ENCODE measurements at regions of chr2 and their contacts with region 1.

Region 1: GRCh38 chr2:43950383-43951008 is 45.3 kb downstream of the LRPPRC start:
- DNase-seq: no peak
- H3K4me3 ChIP-seq: no peak overlapping the region
- H3K27ac ChIP-seq: no peak overlapping the region
- H3K4me1 ChIP-seq: peaks cover 0 to under 1% (median 0%) of the 10 kb centered on the region in 4 experiments; a peak in 1 of 7 replicates
- H3K27me3 ChIP-seq: no peaks in the 10 kb centered on the region
- CTCF ChIP-seq: no peak
- EP300 ChIP-seq: no peak
- POLR2A ChIP-seq: no peak
- RAD21 ChIP-seq: no peak

Region 2: GRCh38 chr2:43960921-43961320 is 10.4 kb after region 1 on chr2:
- CTCF ChIA-PET with region 1: interaction called, 13 read pairs
- POLR2A ChIA-PET with region 1: interaction called, 4 read pairs
- DNase-seq: no peak
- H3K4me3 ChIP-seq: no peak overlapping the region
- H3K27ac ChIP-seq: no peak overlapping the region
- H3K4me1 ChIP-seq: no peaks in the 10 kb centered on the region
- H3K27me3 ChIP-seq: no peaks in the 10 kb centered on the region
- CTCF ChIP-seq: no peak
- EP300 ChIP-seq: no peak
- POLR2A ChIP-seq: no peak
- RAD21 ChIP-seq: no peak

Region 3: DNA sequence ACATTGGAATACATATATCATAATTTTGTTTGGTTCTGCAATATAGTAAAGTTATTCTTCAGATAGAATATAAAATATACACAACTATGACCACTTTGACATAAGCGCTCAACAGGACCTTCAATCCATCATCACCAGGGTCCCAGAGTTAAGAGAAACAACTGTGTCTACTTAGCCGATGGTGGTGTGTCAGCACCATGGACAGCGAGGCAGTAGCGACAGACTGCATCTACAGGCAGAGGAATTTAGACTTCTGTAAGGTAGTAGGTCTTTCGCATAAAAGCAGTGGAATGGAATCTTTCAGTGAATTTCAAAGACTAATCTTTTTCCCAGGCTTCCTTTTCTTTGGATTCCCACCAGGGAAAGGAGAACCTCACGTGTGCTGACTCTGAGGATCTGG is 65.8 kb after region 1 on chr2:
- CTCF ChIA-PET with region 1: no interaction called
- POLR2A ChIA-PET with region 1: no interaction called
- DNase-seq: peak; percentile 13 to 85
- H3K4me3 ChIP-seq: no peak overlapping the region
- H3K27ac ChIP-seq: no peak overlapping the region
- H3K4me1 ChIP-seq: peaks cover 0 to 2% (median 0%) of the 10 kb centered on the region in 4 experiments; a peak in 2 of 7 replicates
- H3K27me3 ChIP-seq: no peaks in the 10 kb centered on the region
- CTCF ChIP-seq: no peak
- EP300 ChIP-seq: no peak
- POLR2A ChIP-seq: no peak
- RAD21 ChIP-seq: no peak